Posterior cingulate gyrus (tissue), 11 donors: ENCODE measurements at regions of chr6 and their contacts with region 1.

Region 1: GRCh38 chr6:11575408-11576033 is 38.0 kb downstream of the TMEM170B start:
- DNase-seq: peak in 6 of 10 donors; percentile 25 to 88 (median 50)

Region 2: GRCh38 chr6:11144393-11144851 is 431.1 kb before region 1 on chr6:
- intact Hi-C with region 1: loop called (anchors 2 kb)
- DNase-seq: peak; percentile 55 to 96 (median 82)

Region 3: DNA sequence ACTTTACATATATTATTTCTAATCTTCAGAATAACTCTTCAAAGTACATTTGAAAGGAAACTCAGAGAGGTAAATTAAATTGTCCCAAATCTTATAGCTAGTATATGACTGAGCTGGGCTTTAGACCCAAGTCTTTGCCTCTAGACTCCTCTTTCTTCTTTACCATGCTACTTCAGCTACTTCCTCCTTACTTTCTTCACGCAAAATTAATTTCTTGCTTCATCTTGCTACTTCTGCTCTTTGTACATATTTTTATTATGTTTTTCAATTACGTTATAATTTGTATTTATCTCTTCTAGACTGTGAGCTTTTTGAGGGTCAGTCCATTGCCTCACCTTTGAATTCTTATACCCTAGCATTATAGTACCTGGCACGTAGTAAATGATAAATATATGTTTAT is 32.7 kb before region 1 on chr6:
- intact Hi-C with region 1: loop called (anchors 5 kb)
- DNase-seq: no peak

Region 4: DNA sequence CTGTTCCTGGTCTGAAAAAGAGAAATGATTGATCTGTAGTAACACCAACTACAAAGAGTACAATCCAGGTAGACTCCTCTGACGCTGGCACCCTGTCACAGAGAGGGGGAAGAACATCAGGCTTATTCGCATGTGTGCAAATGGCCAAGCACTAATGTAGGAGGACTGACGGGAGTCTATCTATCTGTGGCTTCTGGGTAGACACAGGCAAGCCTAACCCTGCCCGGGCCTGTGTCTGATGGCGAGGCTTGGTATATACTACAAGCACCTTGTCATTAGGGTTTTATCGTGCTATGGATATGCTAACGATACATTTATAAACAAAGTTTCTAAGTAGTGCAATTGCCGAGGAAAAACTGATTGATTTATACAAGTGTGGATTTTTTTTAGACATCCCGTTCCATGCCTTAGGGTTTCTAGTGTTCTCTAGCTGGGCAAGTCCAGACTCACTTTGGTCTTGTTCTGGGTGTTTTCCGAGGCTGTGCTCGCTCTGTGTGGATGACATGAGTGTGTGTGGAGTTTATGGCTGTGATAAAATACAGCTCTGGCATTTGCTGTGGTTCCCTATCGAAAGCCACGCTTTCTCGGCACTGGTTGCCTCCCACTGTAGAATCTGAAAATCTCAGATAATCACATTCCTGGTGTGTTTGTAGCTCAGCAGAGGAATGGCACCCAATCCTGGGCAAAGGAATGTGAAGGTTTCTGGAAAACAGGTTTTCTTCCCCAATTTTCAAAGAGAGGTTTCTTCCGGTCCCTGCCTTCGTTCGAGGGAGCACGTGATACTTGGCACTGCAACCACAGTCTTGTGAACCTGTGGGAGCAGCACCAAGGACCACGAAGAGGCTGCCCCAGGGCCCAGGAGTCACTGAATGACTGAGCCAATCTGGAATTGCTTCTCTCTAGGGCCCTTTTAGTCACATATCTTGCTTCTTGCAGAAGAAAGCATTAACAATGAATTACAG is 647.2 kb after region 1 on chr6:
- intact Hi-C with region 1: no loop called
- DNase-seq: no peak